AG04449 (cell line): ENCODE measurements at regions of chr17 and their contacts with region 1.

Region 1: GRCh38 chr17:37770631-37771518 is 26.0 kb upstream of the HNF1B start:
- DNase-seq: no peak
- H3K4me3 ChIP-seq: no peak overlapping the region
- CTCF ChIP-seq: peak; percentile 90

Region 2: GRCh38 chr17:37643118-37643766 is 127.6 kb before region 1 on chr17 and contains the start of gene DDX52:
- CTCF ChIA-PET with region 1: interaction called, 146 read pairs
- POLR2A ChIA-PET with region 1: no interaction called
- DNase-seq: no peak
- H3K4me3 ChIP-seq: peak within 1 kb of the TSS; percentile 93
- CTCF ChIP-seq: no peak

Region 3: GRCh38 chr17:37661400-37662014 is 109.4 kb before region 1 on chr17:
- CTCF ChIA-PET with region 1: interaction called, 18 read pairs
- POLR2A ChIA-PET with region 1: no interaction called
- DNase-seq: no peak
- H3K4me3 ChIP-seq: no peak overlapping the region
- CTCF ChIP-seq: no peak

Region 4: GRCh38 chr17:37701496-37701898 is 69.4 kb before region 1 on chr17:
- CTCF ChIA-PET with region 1: interaction called, 20 read pairs
- POLR2A ChIA-PET with region 1: no interaction called
- DNase-seq: no peak
- H3K4me3 ChIP-seq: no peak overlapping the region
- CTCF ChIP-seq: peak; percentile 32

Region 5: DNA sequence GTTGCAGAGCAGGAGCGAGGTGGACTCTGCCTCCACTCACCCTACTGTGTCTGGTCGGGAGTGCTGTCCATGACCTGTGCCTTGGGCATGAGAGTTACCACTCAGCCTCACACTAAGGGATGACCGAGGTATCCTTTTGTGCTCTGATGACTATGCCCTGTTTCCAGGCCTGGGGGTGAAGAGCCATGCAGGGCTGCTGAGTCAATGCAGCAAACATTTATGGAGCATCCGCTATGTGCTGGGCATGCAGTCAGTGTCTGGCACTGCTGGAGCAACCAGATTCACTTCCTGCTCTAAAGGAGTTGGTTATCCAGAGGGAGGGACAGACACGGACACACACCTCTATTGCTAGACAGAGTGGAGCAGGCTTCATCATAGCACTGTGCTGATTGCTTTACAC is 18.4 kb before region 1 on chr17:
- CTCF ChIA-PET with region 1: interaction called, 39 read pairs
- POLR2A ChIA-PET with region 1: no interaction called
- DNase-seq: peak; percentile 72
- H3K4me3 ChIP-seq: no peak overlapping the region
- CTCF ChIP-seq: no peak

Region 6: DNA sequence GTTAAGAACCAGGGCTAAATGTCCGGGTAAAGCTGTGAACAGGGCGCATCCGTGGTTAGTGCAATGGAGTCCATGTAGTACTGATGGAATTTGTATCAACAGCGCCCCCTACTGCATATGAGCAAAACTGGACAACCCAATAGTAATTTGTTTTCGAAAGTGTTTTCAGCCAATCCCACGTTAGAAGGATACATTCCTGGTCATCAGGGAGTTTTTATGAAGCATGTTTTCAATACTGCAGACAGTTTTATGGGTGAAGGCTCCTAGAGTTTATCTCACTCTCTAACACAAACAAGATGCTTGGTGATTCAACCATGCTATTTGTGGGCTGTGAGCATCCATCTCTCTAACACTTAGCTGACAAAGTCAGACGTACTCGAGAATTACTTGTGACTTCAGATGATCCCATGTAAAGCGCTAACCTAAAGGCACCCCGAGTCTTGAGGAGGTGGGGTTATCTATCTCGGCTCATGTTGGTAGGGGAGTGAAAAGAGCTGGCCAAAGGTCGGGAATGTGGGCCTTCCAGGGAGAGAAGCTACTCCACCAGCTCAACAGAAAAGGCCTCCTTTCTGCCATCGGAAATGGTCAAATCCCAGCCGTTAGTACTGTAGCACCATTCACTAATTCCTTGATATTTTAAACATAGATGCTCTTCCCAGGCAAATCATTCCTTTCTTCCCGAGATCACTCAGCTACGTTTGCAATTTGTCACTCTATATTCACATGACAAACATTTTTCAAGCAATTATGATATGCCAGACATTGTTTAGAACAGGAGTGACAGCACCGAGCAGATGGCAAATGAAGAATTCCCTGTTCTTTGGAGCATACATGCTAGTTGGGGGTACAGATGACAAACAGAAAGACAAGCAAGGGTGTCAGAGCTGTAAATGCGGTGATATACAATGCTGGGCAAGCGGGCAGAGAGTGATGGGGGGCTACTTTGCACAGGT is 20.8 kb after region 1 on chr17:
- CTCF ChIA-PET with region 1: interaction called, 26 read pairs
- POLR2A ChIA-PET with region 1: no interaction called
- DNase-seq: no peak
- H3K4me3 ChIP-seq: no peak overlapping the region
- CTCF ChIP-seq: no peak

Region 7: DNA sequence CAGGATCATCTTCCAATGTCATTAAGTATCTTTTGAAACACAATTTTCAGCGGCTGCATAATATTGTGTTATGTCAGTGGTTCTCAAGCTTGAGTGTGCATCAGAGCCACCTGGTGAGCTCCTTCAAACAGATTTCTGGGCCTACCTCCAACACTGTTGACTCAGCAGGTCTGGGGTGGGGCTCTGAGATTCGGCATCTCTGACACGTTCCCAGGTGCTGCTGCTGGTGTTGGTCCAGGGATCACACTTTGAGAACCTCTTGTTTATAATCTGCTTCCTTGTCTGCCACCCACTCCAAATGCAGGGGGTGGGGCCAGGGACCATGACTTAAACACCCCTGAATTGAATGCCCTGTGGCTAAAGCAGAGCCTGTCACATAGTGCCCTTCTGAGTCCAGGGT is 47.8 kb after region 1 on chr17:
- CTCF ChIA-PET with region 1: interaction called, 36 read pairs
- POLR2A ChIA-PET with region 1: no interaction called
- DNase-seq: no peak
- H3K4me3 ChIP-seq: no peak overlapping the region
- CTCF ChIP-seq: no peak